ENCODE measurements at regions of chr3 and their contacts with region 1.

Region 1: GRCh38 chr3:196969660-196970546 is 1.3 kb upstream of the PIGZ start:
- DNase-seq: peak; percentile 35
- ATAC-seq: peak; percentile 87
- H3K4me3 ChIP-seq: peak overlapping the region; percentile 62
- H3K27ac ChIP-seq: no peak overlapping the region
- H3K4me1 ChIP-seq: peaks cover 4% of the 10 kb centered on the region
- H3K27me3 ChIP-seq: peaks cover 38% of the 10 kb centered on the region
- CTCF ChIP-seq: peak; percentile 85
- POLR2A ChIP-seq: no peak
- RAD21 ChIP-seq: peak; percentile 69

Region 2: DNA sequence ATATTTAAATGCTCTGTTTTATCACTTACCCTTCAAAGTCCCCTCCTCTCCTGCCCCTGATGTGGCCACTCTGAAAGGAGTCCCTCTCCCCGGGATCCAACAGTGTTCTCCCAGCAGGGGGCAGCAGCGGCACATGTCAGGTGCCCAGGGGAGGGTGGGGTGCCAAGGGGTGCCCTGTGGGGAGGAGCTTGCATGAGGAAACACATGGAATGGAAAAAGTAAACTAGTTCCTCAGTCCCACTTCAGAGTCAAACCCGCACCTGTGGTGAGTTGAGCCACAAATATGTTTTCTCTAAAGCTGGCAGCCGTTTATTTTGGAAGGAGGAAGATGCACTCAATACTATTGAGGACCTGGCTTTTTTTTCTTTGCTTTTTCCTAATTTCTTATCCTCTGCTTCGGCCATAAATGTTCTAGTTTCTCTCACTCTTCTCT is 360.5 kb before region 1 on chr3:
- CTCF ChIA-PET with region 1: no interaction called
- POLR2A ChIA-PET with region 1: no interaction called
- dilution Hi-C with region 1: no loop called
- in situ Hi-C with region 1: loop called (anchors 25 kb)
- intact Hi-C with region 1: loop called (anchors 2 kb)
- DNase-seq: peak; percentile 63
- ATAC-seq: peak; percentile 98
- H3K4me3 ChIP-seq: no peak overlapping the region
- H3K27ac ChIP-seq: no peak overlapping the region
- H3K4me1 ChIP-seq: no peaks in the 10 kb centered on the region
- H3K27me3 ChIP-seq: peaks cover 7% of the 10 kb centered on the region
- CTCF ChIP-seq: peak; percentile 83
- POLR2A ChIP-seq: 0 out of 2 replicates have a peak, but pooled peaks have one; percentile 33
- RAD21 ChIP-seq: peak; percentile 92

Region 3: DNA sequence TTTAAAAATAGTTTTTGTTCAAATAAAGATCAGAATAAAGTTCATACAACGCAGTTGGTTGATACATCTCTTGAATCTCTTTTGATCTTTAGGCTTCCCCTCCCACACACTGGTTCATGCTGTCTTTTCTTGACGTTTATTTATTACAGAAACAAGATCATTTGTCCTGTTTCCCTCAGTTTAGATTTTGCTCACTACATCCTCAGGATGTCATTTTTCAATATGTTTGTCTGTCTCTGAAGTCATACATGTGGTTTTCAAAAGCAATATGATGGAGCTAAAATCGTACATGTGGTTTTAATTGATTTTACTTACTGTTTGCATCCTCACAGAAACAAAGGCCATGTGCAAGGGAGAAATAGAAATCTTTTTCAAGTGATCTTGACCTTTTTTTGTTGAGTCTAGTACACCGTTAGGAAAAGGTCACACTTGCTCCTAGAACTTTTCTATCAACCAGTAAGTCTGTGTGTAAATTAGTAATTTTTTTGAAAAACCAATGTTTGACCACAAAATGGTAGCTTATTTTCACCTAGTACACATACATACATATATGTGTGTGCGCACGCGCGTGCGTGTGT is 165.9 kb before region 1 on chr3:
- CTCF ChIA-PET with region 1: no interaction called
- POLR2A ChIA-PET with region 1: no interaction called
- dilution Hi-C with region 1: no loop called
- in situ Hi-C with region 1: no loop called
- intact Hi-C with region 1: no loop called
- DNase-seq: no peak
- ATAC-seq: no peak
- H3K4me3 ChIP-seq: no peak overlapping the region
- H3K27ac ChIP-seq: no peak overlapping the region
- H3K4me1 ChIP-seq: 0 out of 2 replicates have a peak, but pooled peaks cover 1% of the 10 kb centered on the region
- H3K27me3 ChIP-seq: no peaks in the 10 kb centered on the region
- CTCF ChIP-seq: no peak
- POLR2A ChIP-seq: no peak
- RAD21 ChIP-seq: no peak

Region 4: GRCh38 chr3:196837819-196838420 is 132.0 kb before region 1 on chr3:
- CTCF ChIA-PET with region 1: interaction called, 3 read pairs
- POLR2A ChIA-PET with region 1: no interaction called
- dilution Hi-C with region 1: no loop called
- in situ Hi-C with region 1: no loop called
- intact Hi-C with region 1: loop called (anchors 1 kb)
- DNase-seq: peak; percentile 54
- ATAC-seq: peak; percentile 88
- H3K4me3 ChIP-seq: no peak overlapping the region
- H3K27ac ChIP-seq: no peak overlapping the region
- H3K4me1 ChIP-seq: no peaks in the 10 kb centered on the region
- H3K27me3 ChIP-seq: no peaks in the 10 kb centered on the region
- CTCF ChIP-seq: peak; percentile 70
- POLR2A ChIP-seq: no peak
- RAD21 ChIP-seq: peak; percentile 75

Region 5: DNA sequence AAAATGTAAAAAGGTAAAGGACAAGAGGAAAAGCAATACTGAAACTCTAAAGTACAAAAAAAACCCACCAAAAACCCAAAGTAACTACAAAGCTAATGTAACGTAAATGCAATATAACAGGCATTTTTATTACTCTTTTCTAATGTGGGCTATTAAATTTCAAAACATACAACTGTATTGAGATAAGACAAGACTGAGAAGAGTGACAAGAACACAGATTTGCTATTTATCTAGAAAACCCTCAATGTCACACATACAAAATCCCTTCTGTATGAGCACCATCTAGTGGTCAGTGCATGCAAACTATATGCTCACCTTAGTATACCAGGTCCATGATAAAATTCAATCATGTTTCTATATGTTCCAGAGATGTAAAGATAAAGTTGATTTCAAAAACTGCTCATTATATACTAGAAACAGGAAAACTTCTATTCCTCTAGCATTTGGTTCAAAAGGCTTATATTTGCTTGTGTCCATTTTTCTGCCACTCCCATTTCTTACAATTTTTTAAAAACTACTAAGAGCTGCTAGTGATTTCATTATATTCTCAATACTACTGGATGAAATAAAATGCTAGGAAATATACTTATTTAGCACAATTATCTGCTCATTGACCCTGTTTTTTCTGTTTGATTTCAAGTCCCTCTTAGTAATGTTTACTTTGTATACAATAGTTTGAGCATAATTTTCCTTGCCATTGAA is 217.1 kb after region 1 on chr3:
- CTCF ChIA-PET with region 1: interaction called, 3 read pairs
- POLR2A ChIA-PET with region 1: no interaction called
- dilution Hi-C with region 1: no loop called
- in situ Hi-C with region 1: loop called (anchors 10 kb)
- intact Hi-C with region 1: no loop called
- DNase-seq: peak; percentile 66
- ATAC-seq: peak; percentile 84
- H3K4me3 ChIP-seq: no peak overlapping the region
- H3K27ac ChIP-seq: no peak overlapping the region
- H3K4me1 ChIP-seq: peaks cover 4% of the 10 kb centered on the region
- H3K27me3 ChIP-seq: no peaks in the 10 kb centered on the region
- CTCF ChIP-seq: peak; percentile 82
- POLR2A ChIP-seq: no peak
- RAD21 ChIP-seq: peak; percentile 80

Region 6: GRCh38 chr3:197478746-197479668 is 509.1 kb after region 1 on chr3:
- CTCF ChIA-PET with region 1: no interaction called
- POLR2A ChIA-PET with region 1: no interaction called
- dilution Hi-C with region 1: no loop called
- in situ Hi-C with region 1: no loop called
- intact Hi-C with region 1: no loop called
- DNase-seq: no peak
- ATAC-seq: peak; percentile 54
- H3K4me3 ChIP-seq: no peak overlapping the region
- H3K27ac ChIP-seq: no peak overlapping the region
- H3K4me1 ChIP-seq: peaks cover 2% of the 10 kb centered on the region; the same call in 1 of the 2 replicates
- H3K27me3 ChIP-seq: peaks cover 16% of the 10 kb centered on the region
- CTCF ChIP-seq: no peak
- POLR2A ChIP-seq: no peak
- RAD21 ChIP-seq: no peak